ENCODE measurements at regions of chr6 and their contacts with region 1.

Region 1: DNA sequence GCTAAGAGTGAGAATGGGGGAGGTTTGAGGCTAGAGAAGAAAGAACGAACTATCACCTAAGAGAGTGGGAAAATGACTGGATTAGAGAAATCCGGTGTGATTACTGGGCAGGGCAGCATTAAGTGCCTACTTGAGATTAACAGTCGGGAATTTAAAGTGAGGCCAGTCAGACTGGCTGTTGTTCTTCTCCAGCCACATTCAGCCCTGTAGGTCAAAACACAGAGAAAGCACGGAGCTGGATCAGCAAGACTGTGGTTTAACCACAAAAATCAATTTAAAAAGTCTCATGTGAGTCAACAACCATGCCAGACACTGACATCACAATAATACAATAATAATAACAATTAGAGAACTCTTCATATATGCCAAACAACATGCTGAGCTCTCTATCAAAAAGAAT is 301.9 kb upstream of the SGK1 start:
- DNase-seq: no peak
- H3K4me3 ChIP-seq: no peak overlapping the region
- H3K27me3 ChIP-seq: no peaks in the 10 kb centered on the region; the same call in none of the 2 replicates
- CTCF ChIP-seq: no peak

Region 2: DNA sequence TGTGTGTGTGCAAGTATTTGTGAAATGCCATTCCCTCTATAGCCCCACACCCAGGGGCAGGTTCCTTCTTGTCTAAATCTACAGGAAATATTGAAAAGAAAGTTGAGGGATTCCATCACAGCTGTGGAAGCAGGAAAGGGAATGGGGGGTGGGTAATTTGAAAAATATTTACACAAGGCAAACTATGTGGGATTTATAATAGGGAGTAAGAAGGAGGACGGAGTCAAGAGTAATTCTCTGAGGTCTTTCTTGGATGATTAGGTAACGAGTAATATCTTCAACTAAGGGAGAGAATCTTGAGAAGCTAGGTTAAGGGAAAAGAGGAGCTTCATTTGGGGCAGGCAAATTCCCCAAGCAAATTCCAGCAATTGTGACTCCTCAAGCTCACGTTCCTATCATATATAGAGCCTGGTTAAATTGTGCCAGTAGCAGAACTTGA is 188.3 kb before region 1 on chr6:
- CTCF ChIA-PET with region 1: no interaction called
- POLR2A ChIA-PET with region 1: no interaction called
- DNase-seq: peak; percentile 59
- H3K4me3 ChIP-seq: no peak overlapping the region
- H3K27me3 ChIP-seq: no peaks in the 10 kb centered on the region
- CTCF ChIP-seq: no peak

Region 3: GRCh38 chr6:134604014-134604676 is 15.6 kb before region 1 on chr6:
- CTCF ChIA-PET with region 1: interaction called, 12 read pairs
- POLR2A ChIA-PET with region 1: no interaction called
- DNase-seq: no peak
- H3K4me3 ChIP-seq: no peak overlapping the region
- H3K27me3 ChIP-seq: no peaks in the 10 kb centered on the region
- CTCF ChIP-seq: no peak

Region 4: GRCh38 chr6:134657751-134658522 is 38.1 kb after region 1 on chr6:
- CTCF ChIA-PET with region 1: no interaction called
- POLR2A ChIA-PET with region 1: interaction called, 10 read pairs
- DNase-seq: no peak
- H3K4me3 ChIP-seq: no peak overlapping the region
- H3K27me3 ChIP-seq: no peaks in the 10 kb centered on the region
- CTCF ChIP-seq: no peak

Measured in BJ (cell line).